ENCODE measurements at regions of chr11 and their contacts with region 1.

Region 1: DNA sequence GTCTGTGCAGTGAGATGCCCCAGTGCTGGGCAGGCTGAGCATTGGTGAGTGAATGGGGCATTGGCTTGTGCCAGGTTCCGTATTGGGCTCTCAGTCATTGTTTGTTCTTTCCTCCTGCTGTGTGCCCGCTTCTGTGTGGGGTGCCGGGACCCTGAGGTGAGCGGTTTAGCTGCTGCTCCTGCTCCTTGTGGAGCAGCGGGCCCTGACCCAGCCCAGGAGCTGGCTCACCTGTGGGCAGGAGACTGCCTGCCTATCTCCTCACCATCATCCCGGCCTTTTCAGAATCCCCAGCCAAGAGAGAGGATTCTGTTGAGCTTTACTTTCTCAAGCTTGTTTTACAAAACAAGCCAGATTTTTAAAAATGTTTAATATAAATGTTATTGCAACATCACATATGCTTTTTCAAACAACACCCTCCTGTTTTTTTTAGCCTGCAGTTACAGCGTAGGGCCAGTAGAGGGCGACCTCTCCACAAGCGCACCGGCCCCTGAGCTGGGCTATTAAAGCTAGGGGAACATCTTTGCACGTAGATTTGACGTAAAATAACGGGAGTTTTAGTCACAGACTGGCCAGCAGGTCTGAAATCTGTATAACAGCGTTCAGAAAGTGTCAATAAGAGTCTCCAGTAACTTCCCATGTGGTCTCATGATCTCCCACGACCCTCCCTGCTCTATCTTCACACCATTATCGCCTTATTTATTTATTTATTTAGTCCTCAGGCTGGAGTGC is 25.1 kb upstream of the RELT start:
- DNase-seq: peak; percentile 73 to 78 (median 74)
- H3K4me3 ChIP-seq: no peak overlapping the region
- H3K4me3 Mint-ChIP-seq: no peak overlapping the region
- H3K27ac ChIP-seq: no peak overlapping the region
- H3K27ac Mint-ChIP-seq: peak overlapping the region in 1 of 7 donors; percentile 56
- H3K4me1 ChIP-seq: peaks cover 12 to 15% of the 10 kb centered on the region in 2 donors
- H3K4me1 Mint-ChIP-seq: peaks cover 15% of the 10 kb centered on the region
- H3K27me3 ChIP-seq: no peaks in the 10 kb centered on the region
- H3K27me3 Mint-ChIP-seq: peaks cover 0 to 4% (median 0%) of the 10 kb centered on the region in 3 donors
- CTCF ChIP-seq: peak; percentile 91

Region 2: DNA sequence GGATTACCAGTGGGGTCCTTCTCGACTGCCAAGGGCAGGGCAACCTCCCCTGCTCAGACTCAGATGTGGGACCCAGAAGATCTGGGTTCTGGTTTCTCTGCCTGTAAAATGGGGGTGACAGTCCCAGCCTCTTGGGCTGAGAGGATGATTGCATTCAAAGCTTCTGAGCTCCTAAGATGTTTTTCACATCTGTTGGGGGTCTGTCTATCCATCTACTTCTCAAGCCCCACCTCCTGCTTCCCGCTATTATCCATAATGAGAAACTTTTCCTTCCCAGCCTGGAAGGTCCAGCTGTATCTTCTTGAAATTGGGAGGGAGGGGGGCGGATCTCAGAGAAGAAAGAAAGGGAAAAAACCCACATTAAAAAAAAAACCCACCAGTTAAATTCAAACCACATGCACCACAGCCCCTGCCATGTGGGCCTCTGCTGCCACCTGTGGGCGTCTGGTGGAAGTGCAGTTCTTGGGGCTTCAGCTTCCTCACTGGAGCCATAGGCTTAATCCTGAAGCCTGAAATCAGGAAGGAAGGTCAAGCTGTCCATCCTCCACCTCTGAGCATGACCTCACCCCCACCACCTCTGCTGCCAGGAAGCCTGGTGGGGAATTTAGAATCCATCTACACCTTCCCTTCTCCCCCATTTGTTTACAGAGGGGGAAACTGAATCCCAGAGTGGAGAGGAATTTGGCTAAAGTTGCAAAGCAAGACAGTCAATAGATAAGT is 15.7 kb before region 1 on chr11:
- intact Hi-C with region 1: no loop called
- DNase-seq: peak; percentile 61 to 78 (median 77)
- H3K4me3 ChIP-seq: no peak overlapping the region
- H3K4me3 Mint-ChIP-seq: no peak overlapping the region
- H3K27ac ChIP-seq: no peak overlapping the region
- H3K27ac Mint-ChIP-seq: no peak overlapping the region
- H3K4me1 ChIP-seq: peaks cover 2 to 6% of the 10 kb centered on the region in 2 donors
- H3K4me1 Mint-ChIP-seq: peaks cover 7% of the 10 kb centered on the region
- H3K27me3 ChIP-seq: no peaks in the 10 kb centered on the region
- H3K27me3 Mint-ChIP-seq: peaks cover 0 to 7% (median 4%) of the 10 kb centered on the region in 3 donors
- CTCF ChIP-seq: peak; percentile 97

Region 3: GRCh38 chr11:73393479-73394380 is 42.7 kb after region 1 on chr11:
- intact Hi-C with region 1: loop called (anchors 1 to 2 kb)
- DNase-seq: peak; percentile 70 to 75 (median 75)
- H3K4me3 ChIP-seq: no peak overlapping the region
- H3K4me3 Mint-ChIP-seq: peak overlapping the region in 1 of 2 donors; percentile 37
- H3K27ac ChIP-seq: peak overlapping the region; percentile 61 to 63
- H3K27ac Mint-ChIP-seq: peak overlapping the region in 6 of 7 donors; percentile 76 to 93 (median 84)
- H3K4me1 ChIP-seq: peaks cover 29 to 46% of the 10 kb centered on the region in 2 donors
- H3K4me1 Mint-ChIP-seq: peaks cover 36% of the 10 kb centered on the region
- H3K27me3 ChIP-seq: no peaks in the 10 kb centered on the region
- H3K27me3 Mint-ChIP-seq: peaks cover 0 to 3% (median 0%) of the 10 kb centered on the region in 3 donors
- CTCF ChIP-seq: peak; percentile 83

Region 4: DNA sequence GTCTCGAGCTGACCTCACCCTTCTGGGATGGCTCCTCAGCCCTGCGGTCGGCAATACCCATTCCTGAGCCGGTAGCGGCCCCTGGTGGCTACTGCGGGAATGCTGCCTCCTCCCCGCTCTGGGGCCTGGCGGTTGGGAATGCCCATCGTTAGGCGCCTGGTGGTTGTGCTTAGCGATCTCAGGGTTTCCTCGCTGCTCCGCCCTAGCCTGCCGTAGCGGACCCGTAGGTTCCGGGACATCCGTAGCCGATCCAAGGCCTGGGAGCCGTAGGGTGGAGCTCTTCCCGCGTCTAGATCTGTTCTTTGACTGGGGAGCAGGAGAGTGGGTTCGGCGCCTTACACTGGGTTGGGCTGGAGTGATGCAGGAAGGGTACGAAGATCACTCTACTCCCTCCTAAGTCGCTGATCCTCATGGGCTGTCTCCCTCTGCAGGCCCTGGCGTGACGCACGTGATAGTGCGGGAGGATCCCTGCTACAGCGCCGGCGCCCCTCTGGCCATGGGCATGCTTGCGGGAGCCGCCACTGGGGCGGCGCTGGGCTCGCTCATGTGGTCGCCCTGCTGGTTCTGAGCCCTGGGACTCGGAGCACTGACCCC is 310.1 kb after region 1 on chr11:
- intact Hi-C with region 1: loop called in 1 of 2 experiments (anchors 5 kb)
- DNase-seq: peak; percentile 73 to 82 (median 81)
- H3K4me3 ChIP-seq: peak overlapping the region in 2 of 3 experiments; percentile 19 to 65
- H3K4me3 Mint-ChIP-seq: peak overlapping the region; percentile 64 to 85
- H3K27ac ChIP-seq: no peak overlapping the region
- H3K27ac Mint-ChIP-seq: no peak overlapping the region
- H3K4me1 ChIP-seq: peaks cover 23 to 28% of the 10 kb centered on the region in 2 donors
- H3K4me1 Mint-ChIP-seq: peaks cover 31% of the 10 kb centered on the region
- H3K27me3 ChIP-seq: peaks cover 0 to 12% of the 10 kb centered on the region in 2 donors
- H3K27me3 Mint-ChIP-seq: peaks cover 17 to 24% (median 18%) of the 10 kb centered on the region in 3 donors
- CTCF ChIP-seq: peak; percentile 98